Dendritic cell treated with granulocyte-macrophage colony-stimulating factor and Interleukin-4, amounts not matched to agents 40 ng/mL and 50 ng/mL, for 4 days (primary cell): ENCODE measurements at regions of chr2 and their contacts with region 1.

Region 1: GRCh38 chr2:186589612-186590349 is at the start of gene ITGAV:
- H3K4me3 Mint-ChIP-seq: peak within 1 kb of the TSS; percentile 80
- H3K27ac Mint-ChIP-seq: peak within 1 kb of the TSS; percentile 96
- H3K4me1 Mint-ChIP-seq: peaks cover 34% of the 10 kb centered on the region
- H3K27me3 Mint-ChIP-seq: peaks cover 1% of the 10 kb centered on the region

Region 2: GRCh38 chr2:186485871-186486650 is 103.7 kb before region 1 on chr2 and contains the start of gene ZC3H15:
- intact Hi-C with region 1: loop called (anchors 5 kb)
- H3K4me3 Mint-ChIP-seq: peak within 1 kb of the TSS; percentile 94
- H3K27ac Mint-ChIP-seq: peak within 1 kb of the TSS; percentile 95
- H3K4me1 Mint-ChIP-seq: peaks cover 31% of the 10 kb centered on the region
- H3K27me3 Mint-ChIP-seq: no peaks in the 10 kb centered on the region

Region 3: DNA sequence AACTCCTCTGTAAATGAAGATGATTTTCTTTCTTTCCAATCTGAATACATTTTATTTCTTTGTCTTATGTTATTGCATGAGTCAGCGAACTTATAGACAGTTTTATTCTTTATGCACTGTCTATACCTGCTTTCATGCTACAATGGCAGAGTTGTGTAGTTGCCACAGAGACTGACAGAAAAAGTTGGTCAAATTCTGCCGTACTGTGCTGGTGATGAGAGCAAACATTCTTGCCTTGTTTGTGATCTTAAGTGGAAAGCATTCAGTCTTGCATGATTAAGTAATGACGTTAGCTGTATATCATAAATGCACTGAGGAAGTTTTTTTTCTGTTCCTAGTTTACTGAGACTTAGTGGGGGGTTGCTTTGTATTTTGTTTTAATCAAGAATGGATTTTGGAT is 70.8 kb before region 1 on chr2:
- intact Hi-C with region 1: loop called (anchors 5 kb)
- H3K4me3 Mint-ChIP-seq: no peak overlapping the region
- H3K27ac Mint-ChIP-seq: no peak overlapping the region
- H3K4me1 Mint-ChIP-seq: no peaks in the 10 kb centered on the region
- H3K27me3 Mint-ChIP-seq: no peaks in the 10 kb centered on the region

Region 4: DNA sequence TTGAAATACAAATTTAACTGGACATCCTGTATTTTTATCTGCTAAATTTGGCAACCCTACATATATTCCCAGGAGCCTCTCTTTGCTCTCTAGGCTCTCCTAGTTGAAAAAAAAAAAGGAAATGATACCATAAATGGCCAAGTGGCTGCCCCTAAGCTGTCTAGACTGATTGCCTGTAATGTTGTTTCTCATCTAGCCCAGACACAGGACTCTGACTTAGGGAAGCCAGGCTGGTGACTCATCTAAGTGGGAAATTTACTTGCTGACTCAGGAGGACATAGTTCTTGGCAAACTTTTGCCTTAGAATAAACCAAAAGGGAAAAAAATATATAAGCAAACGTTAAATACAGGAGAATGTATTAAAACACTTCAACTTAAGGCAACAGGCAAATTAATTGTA is 14.5 kb before region 1 on chr2:
- intact Hi-C with region 1: loop called (anchors 1 kb)
- H3K4me3 Mint-ChIP-seq: no peak overlapping the region
- H3K27ac Mint-ChIP-seq: peak overlapping the region; percentile 51
- H3K4me1 Mint-ChIP-seq: peaks cover 20% of the 10 kb centered on the region
- H3K27me3 Mint-ChIP-seq: no peaks in the 10 kb centered on the region

Region 5: GRCh38 chr2:186641807-186642321 is 52.1 kb after region 1 on chr2:
- intact Hi-C with region 1: loop called (anchors 5 kb)
- H3K4me3 Mint-ChIP-seq: no peak overlapping the region
- H3K27ac Mint-ChIP-seq: no peak overlapping the region
- H3K4me1 Mint-ChIP-seq: peaks cover 35% of the 10 kb centered on the region
- H3K27me3 Mint-ChIP-seq: no peaks in the 10 kb centered on the region